Activated naive CD4-positive, alpha-beta T cell treated with anti-CD3 and anti-CD28 coated beads for 36 hours (primary cell): ENCODE measurements at regions of chr17 and their contacts with region 1.

Region 1: GRCh38 chr17:37770631-37771518 is 26.0 kb upstream of the HNF1B start:
- DNase-seq: peak; percentile 72
- H3K4me3 Mint-ChIP-seq: no peak overlapping the region
- H3K27ac Mint-ChIP-seq: no peak overlapping the region
- H3K4me1 Mint-ChIP-seq: peaks cover 22% of the 10 kb centered on the region
- H3K27me3 Mint-ChIP-seq: peaks cover 27% of the 10 kb centered on the region

Region 2: DNA sequence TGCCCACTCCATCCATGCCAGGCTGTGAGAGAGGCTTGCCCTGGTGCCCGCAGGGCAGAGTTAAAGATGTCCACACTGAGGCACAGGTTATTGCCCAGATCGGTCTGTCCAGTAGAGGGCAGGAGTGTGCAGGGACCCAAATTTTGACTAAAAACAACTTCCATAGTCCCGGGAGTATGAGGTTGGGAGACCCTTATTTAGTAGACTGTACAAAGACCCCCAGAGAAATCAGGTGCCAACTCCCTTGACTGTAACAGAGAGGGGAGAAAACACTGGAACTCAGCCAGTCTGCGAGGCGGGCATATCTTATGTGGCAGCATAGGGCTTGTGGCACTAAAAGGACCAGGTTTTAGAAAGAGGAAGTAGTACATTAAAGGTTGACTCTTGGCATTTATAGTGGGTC is 69.4 kb before region 1 on chr17:
- CTCF ChIA-PET with region 1: interaction called, 8 read pairs
- intact Hi-C with region 1: loop called (anchors 1 kb)
- DNase-seq: peak; percentile 70
- H3K4me3 Mint-ChIP-seq: no peak overlapping the region
- H3K27ac Mint-ChIP-seq: no peak overlapping the region
- H3K4me1 Mint-ChIP-seq: peaks cover 20% of the 10 kb centered on the region
- H3K27me3 Mint-ChIP-seq: peaks cover 14% of the 10 kb centered on the region

Region 3: DNA sequence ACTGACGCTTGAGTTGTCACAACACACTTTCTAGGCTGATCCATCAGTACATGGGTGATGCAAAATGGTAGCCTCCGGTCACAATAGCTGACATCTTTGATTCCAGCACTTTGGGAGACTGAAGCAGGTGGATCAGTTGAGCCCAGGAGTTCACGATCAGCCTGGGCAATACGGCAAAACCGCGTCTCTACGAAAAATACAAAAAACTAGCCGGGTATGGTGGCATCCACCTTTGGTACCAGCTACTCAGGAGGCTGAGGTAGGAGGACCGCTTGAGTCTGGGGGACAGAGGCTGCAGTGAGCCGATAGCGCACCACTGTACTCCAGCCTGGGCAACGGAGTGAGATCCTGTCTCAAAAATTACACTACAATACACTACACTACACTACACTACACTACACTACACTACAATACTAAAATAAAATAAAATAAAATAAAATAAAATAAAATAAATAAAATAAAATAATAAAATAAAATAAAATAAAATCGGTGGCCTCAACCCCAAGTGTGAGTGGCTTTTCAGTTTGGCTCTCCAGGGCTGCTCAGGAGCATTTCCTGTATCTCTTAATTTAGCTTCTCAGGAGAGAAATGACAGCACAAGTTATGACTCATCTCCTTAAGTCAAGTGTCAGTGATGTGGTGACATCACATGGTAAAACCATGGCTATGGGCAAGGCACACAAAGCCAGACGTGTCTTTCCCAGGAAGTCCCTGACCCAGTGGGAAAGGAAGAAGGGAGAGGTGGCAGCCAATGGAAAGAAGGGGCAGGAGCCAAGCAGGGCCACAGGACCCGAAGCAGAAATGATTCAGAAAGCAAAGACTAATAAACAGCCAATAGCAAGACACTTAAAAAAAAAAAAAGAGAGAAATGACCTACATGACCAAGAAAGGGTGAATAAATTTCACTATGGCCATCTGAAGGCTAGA is 78.1 kb after region 1 on chr17:
- CTCF ChIA-PET with region 1: no interaction called
- intact Hi-C with region 1: loop called (anchors 1 kb)
- DNase-seq: peak; percentile 56
- H3K4me3 Mint-ChIP-seq: no peak overlapping the region
- H3K27ac Mint-ChIP-seq: no peak overlapping the region
- H3K4me1 Mint-ChIP-seq: peaks cover 20% of the 10 kb centered on the region
- H3K27me3 Mint-ChIP-seq: peaks cover 6% of the 10 kb centered on the region

Region 4: DNA sequence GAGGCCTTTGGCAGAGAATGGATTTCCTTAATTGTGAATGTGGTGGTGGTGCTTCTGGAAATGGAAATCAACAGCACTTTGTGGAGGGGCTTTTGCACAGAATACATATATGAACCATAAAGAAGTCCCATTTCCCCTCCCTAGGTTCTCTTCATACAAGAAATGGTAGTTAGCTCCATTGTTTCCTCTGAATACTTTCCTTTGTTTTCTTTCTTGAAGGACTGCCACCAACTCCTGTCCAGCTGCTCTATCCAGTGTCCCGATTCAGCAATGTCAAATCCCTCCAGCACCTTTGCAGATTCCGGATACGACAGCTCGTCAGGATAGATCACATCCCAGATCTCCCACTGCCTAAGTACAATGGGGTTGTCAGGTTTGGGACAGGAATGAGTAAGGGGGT is 624.2 kb after region 1 on chr17:
- CTCF ChIA-PET with region 1: no interaction called
- intact Hi-C with region 1: no loop called
- DNase-seq: no peak
- H3K4me3 Mint-ChIP-seq: no peak overlapping the region
- H3K27ac Mint-ChIP-seq: no peak overlapping the region
- H3K4me1 Mint-ChIP-seq: no peaks in the 10 kb centered on the region
- H3K27me3 Mint-ChIP-seq: no peaks in the 10 kb centered on the region